Activated CD4-positive, alpha-beta T cell treated with anti-CD3 and anti-CD28 coated beads for 36 hours (primary cell): ENCODE measurements at regions of chr3 and their contacts with region 1.

Region 1: DNA sequence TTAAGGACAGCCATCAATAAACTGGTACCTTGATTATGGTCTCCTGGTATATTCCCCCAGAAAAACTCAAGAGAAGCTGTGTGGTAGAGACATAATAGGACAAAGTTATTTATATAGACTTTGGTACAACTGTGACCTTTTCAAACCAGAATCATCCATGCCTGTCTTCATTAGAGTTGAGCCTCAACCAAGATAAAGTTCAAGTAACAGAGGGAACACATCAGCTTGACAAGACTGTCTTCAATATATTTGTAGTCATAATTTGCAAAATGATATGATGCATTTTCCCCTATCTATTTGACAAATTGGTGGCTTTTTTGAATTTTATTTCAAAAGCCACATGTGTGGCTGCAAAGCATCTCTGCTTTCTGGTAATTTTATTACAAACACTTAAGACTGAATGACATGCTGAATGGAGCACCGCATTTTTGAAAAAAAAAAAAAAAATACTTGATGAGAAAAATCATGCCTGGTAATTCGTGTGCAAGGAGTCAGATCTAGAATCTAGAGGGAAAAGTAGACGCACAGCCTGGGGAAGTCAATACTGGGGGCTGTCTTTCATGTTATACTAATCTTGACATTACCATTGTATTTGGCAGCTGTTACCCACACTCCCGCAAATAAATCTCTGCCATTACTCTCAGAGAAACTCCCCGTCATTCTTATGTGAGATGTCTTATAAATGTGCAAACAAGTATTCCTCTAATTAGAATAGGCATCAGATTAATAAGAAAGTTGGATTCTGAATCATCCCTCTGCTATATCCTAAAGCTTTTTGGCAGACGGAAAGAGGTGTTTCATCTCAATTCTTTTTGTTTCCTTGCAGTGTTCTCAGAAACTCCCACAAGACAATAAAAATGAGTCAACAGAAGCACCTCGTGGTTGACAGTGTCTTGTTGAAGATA is 554.8 kb upstream of the CBLB start:
- DNase-seq: peak; percentile 59
- ATAC-seq: peak; percentile 70
- H3K4me3 Mint-ChIP-seq: peak overlapping the region; percentile 47
- H3K27ac Mint-ChIP-seq: peak overlapping the region; percentile 93
- H3K4me1 Mint-ChIP-seq: peaks cover 60% of the 10 kb centered on the region
- H3K27me3 Mint-ChIP-seq: no peaks in the 10 kb centered on the region

Region 2: GRCh38 chr3:105676621-105677300 is 746.8 kb before region 1 on chr3:
- CTCF ChIA-PET with region 1: no interaction called
- POLR2A ChIA-PET with region 1: no interaction called
- intact Hi-C with region 1: loop called (anchors 1 kb)
- DNase-seq: peak; percentile 74
- ATAC-seq: peak; percentile 94
- H3K4me3 Mint-ChIP-seq: peak overlapping the region; percentile 27
- H3K27ac Mint-ChIP-seq: peak overlapping the region; percentile 87
- H3K4me1 Mint-ChIP-seq: peaks cover 27% of the 10 kb centered on the region
- H3K27me3 Mint-ChIP-seq: no peaks in the 10 kb centered on the region

Region 3: GRCh38 chr3:105686278-105686897 is 737.2 kb before region 1 on chr3:
- CTCF ChIA-PET with region 1: interaction called, 4 read pairs
- POLR2A ChIA-PET with region 1: no interaction called
- intact Hi-C with region 1: loop called in 1 of 2 experiments (anchors 5 kb)
- DNase-seq: no peak
- ATAC-seq: no peak
- H3K4me3 Mint-ChIP-seq: no peak overlapping the region
- H3K27ac Mint-ChIP-seq: peak overlapping the region; percentile 42
- H3K4me1 Mint-ChIP-seq: peaks cover 24% of the 10 kb centered on the region
- H3K27me3 Mint-ChIP-seq: no peaks in the 10 kb centered on the region

Region 4: DNA sequence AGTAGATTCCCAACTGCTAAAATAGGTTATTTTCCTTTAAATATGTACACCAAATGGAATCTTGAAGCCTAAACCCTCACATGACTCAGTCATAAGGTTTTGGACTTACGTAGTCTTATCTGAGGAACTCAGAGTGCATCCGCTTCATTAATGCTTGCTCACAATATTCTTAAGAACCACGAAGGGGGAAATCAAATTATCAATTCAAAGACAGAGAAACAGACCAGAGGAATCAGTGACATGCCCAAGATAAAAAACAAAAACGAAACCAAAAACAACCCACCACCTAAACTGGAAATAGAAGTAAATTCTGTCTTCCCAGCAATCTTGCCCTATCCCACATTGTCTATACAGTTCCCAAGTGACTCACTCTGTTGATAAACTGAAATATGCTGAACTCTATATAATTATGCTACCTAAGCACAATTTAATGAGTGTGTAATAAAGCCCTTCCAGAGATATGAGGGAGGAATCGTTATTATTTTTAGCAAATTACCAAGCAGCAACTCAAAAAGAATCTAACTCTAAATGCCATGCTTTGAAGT is 419.4 kb before region 1 on chr3:
- CTCF ChIA-PET with region 1: no interaction called
- POLR2A ChIA-PET with region 1: no interaction called
- intact Hi-C with region 1: loop called in 1 of 2 experiments (anchors 2 kb)
- DNase-seq: no peak
- ATAC-seq: peak; percentile 78
- H3K4me3 Mint-ChIP-seq: peak overlapping the region; percentile 5
- H3K27ac Mint-ChIP-seq: no peak overlapping the region
- H3K4me1 Mint-ChIP-seq: peaks cover 24% of the 10 kb centered on the region
- H3K27me3 Mint-ChIP-seq: no peaks in the 10 kb centered on the region

Region 5: DNA sequence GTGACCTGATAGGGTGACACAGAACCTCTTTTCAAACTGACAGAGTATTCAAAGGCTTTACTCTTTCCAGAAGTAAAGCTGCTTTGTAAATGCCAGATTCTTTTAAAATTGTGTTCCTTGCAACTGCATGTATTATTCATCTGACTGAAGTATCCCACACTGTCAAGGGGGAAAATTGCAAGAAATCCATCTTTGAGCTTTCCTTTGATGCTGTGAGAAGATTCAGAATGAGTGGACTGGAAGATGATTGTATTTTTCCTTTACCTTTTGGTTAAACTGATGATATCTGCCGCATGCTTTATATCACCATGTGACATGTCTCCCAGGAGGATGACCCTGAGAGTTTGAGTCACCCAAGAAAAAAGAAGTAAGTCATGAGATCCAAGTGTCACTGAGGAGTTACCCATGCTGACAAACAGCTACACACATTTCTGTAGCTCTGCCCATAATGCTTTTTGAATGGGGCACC is 303.9 kb before region 1 on chr3:
- CTCF ChIA-PET with region 1: no interaction called
- POLR2A ChIA-PET with region 1: no interaction called
- intact Hi-C with region 1: loop called (anchors 1 to 10 kb)
- DNase-seq: peak; percentile 28
- ATAC-seq: peak; percentile 99
- H3K4me3 Mint-ChIP-seq: no peak overlapping the region
- H3K27ac Mint-ChIP-seq: peak overlapping the region; percentile 83
- H3K4me1 Mint-ChIP-seq: peaks cover 26% of the 10 kb centered on the region
- H3K27me3 Mint-ChIP-seq: no peaks in the 10 kb centered on the region

Region 6: DNA sequence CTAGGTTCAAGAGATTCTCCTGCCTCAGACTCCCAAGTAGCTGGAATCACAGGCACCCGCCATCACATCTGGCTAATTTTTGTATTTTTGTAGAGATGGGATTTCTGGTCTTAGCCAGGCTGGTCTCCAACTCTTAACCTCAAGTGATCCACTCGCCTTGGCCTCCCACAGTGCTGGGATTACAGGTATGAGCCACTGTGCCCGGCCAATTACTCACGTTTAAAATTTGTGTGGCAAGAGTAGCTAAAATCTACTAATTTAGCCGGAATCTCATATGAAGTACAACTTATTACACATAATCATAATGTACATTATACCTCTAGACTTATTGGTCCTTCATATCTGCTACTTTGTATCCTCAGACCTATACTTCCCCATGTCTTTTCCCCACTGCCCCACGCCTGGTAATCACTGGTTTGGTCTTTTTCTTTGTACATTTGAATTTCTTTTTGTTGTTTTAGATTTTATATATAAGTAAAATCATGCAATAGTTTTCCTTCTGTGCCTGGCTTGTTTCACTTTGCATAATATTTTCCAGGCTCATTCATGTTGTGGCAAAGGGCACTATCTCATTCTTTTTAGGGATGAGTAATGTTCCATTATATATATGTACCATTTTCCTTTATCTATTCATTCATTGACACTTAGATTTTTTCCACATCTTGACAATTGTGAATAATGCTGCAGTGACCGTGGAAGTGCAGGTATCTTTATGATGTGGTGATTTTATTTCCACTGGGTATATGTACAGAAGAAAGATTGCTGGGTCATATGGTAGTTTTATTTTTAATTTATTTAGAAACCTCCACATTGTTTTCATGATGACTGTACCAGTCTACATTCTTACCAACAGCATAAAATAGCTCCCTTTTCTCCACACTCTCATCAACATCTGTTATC is 50.3 kb after region 1 on chr3:
- CTCF ChIA-PET with region 1: interaction called, 4 read pairs
- POLR2A ChIA-PET with region 1: interaction called, 3 read pairs
- intact Hi-C with region 1: loop called (anchors 1 kb)
- DNase-seq: peak; percentile 47
- ATAC-seq: peak; percentile 86
- H3K4me3 Mint-ChIP-seq: no peak overlapping the region
- H3K27ac Mint-ChIP-seq: peak overlapping the region; percentile 88
- H3K4me1 Mint-ChIP-seq: peaks cover 28% of the 10 kb centered on the region
- H3K27me3 Mint-ChIP-seq: no peaks in the 10 kb centered on the region

Region 7: DNA sequence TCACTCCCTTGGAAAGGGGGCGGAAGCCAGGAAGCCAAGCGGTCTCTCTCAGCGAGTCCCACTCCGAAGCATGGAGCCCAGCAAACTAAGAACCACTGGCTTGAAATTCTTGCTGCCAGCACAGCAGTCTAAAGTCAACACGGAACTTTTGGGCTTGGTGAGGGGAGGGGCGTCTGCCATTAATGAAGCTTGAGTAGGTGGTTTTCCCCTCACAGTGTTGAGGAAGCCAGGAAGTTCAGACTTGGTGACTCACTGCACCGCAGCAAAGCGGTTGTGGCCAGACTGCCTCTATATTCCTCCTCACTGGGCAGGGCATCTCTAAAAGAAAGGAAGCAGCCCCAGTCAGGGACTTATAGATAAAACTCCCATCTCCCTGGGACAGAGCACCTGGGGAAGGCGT is 110.6 kb after region 1 on chr3:
- CTCF ChIA-PET with region 1: no interaction called
- POLR2A ChIA-PET with region 1: no interaction called
- intact Hi-C with region 1: loop called (anchors 1 to 2 kb)
- DNase-seq: peak; percentile 74
- ATAC-seq: peak; percentile 93
- H3K4me3 Mint-ChIP-seq: no peak overlapping the region
- H3K27ac Mint-ChIP-seq: peak overlapping the region; percentile 30
- H3K4me1 Mint-ChIP-seq: peaks cover 26% of the 10 kb centered on the region
- H3K27me3 Mint-ChIP-seq: peaks cover 2% of the 10 kb centered on the region